ENCODE measurements at regions of chr14 and their contacts with region 1.

Region 1: DNA sequence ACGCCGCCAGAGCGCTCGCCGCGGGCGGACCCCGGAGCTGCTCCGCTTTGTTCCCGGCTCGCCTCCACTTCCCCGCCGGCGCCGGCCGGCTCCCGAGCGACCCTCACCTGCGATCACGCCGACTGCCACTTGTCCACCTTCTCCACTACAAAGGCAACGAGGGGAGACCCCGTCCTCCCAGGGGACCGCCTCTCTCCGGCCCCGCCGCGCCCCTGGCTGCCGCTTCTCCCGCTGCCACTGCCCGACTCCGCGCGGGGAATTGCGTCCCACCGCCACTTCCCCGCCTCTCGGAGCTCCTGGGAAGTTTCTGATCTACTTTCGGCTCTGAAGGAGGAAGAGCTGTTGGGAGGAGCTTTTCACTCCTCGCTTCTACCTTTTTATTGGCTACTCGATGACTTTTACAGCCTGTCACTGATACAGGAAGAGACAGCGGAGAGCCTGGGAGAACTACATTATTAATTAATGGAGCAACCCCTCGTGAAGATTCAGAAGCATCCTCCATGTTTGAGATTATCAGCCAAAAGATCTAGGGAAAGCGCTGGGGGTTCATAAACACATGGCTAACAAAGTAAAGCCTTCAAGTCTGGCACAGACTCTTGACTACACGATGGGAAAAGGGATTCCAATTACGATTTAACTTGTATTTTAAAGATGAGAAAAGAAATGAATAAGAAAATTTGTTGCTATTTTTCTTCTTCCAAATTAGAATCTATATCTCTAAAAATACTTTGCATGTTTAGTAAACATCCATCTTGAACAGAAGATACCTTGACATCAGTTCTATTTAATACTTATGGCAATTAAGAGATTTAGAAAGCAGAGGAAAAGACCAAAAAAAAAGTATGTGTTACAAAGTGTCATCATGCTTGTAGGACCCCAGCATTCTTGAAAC is at the start of gene BAZ1A:
- DNase-seq: peak; percentile 40
- ATAC-seq: no peak
- H3K4me3 Mint-ChIP-seq: peak within 1 kb of the TSS; percentile 100
- H3K27ac Mint-ChIP-seq: peak within 1 kb of the TSS; percentile 100
- H3K4me1 Mint-ChIP-seq: peaks cover 29% of the 10 kb centered on the region
- H3K27me3 Mint-ChIP-seq: no peaks in the 10 kb centered on the region
- CTCF ChIP-seq: no peak
- total RNA-seq, gene BAZ1A: 47.4 to 49.4 TPM

Region 2: GRCh38 chr14:34851395-34851794 is 23.9 kb before region 1 on chr14:
- CTCF ChIA-PET with region 1: no interaction called
- POLR2A ChIA-PET with region 1: interaction called, 10 read pairs
- intact Hi-C with region 1: no loop called
- DNase-seq: no peak
- ATAC-seq: no peak
- H3K4me3 Mint-ChIP-seq: no peak overlapping the region
- H3K27ac Mint-ChIP-seq: no peak overlapping the region
- H3K4me1 Mint-ChIP-seq: peaks cover 20% of the 10 kb centered on the region
- H3K27me3 Mint-ChIP-seq: no peaks in the 10 kb centered on the region
- CTCF ChIP-seq: no peak

Region 3: DNA sequence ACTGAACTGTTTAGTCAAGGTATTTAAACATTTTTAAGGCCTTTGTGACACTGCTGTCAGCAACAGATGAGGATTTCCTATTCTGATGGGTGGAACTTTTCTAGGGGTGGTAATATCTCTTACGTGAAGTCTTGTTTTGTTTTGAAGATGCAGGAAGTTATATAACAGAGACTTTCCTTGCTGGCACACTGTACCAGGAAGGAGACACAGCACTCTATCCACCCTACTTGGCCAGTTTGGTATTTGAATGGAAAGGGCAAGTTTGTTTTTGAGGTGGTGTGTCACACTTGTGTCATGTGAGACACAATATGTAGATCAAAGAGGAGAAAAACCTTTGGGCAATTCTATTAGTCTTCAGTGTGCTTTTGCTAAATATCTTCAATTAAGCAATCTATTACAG is 55.9 kb after region 1 on chr14:
- CTCF ChIA-PET with region 1: no interaction called
- POLR2A ChIA-PET with region 1: interaction called, 13 read pairs
- intact Hi-C with region 1: no loop called
- DNase-seq: peak; percentile 48
- ATAC-seq: peak; percentile 79
- H3K4me3 Mint-ChIP-seq: peak overlapping the region; percentile 60
- H3K27ac Mint-ChIP-seq: peak overlapping the region; percentile 97
- H3K4me1 Mint-ChIP-seq: peaks cover 40% of the 10 kb centered on the region
- H3K27me3 Mint-ChIP-seq: no peaks in the 10 kb centered on the region
- CTCF ChIP-seq: no peak

Region 4: DNA sequence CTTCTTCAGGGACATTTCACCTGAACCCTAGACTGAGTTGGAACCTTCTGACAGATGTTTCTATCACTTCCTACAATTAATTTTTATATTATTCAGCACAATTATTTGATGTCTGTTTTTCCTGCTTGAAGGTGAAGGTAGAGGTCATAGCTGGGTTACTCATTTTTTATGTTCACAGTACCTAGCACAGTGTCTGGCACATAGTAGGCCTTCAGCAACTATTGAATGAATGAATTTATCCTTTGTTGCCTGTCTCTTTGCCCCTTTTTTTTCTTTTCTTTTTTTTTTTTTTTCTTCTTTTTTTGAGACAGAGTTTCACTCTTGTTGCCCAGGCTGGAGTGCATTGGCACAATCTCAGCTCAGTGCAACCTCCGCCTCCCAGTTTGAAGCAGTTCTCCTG is 141.3 kb after region 1 on chr14:
- CTCF ChIA-PET with region 1: no interaction called
- POLR2A ChIA-PET with region 1: no interaction called
- intact Hi-C with region 1: no loop called
- DNase-seq: no peak
- ATAC-seq: no peak
- H3K4me3 Mint-ChIP-seq: no peak overlapping the region
- H3K27ac Mint-ChIP-seq: peak overlapping the region; percentile 64
- H3K4me1 Mint-ChIP-seq: no peaks in the 10 kb centered on the region
- H3K27me3 Mint-ChIP-seq: no peaks in the 10 kb centered on the region
- CTCF ChIP-seq: no peak

Region 5: GRCh38 chr14:35046048-35046741 is 170.9 kb after region 1 on chr14 and contains the start of gene FAM177A1:
- CTCF ChIA-PET with region 1: no interaction called
- POLR2A ChIA-PET with region 1: interaction called, 10 read pairs
- intact Hi-C with region 1: no loop called
- DNase-seq: peak; percentile 100
- ATAC-seq: peak; percentile 95
- H3K4me3 Mint-ChIP-seq: peak within 1 kb of the TSS; percentile 83
- H3K27ac Mint-ChIP-seq: peak within 1 kb of the TSS; percentile 97
- H3K4me1 Mint-ChIP-seq: peaks cover 25% of the 10 kb centered on the region
- H3K27me3 Mint-ChIP-seq: no peaks in the 10 kb centered on the region
- CTCF ChIP-seq: no peak
- total RNA-seq, gene FAM177A1: 28.0 to 35.8 TPM

Measured in activated CD8-positive, alpha-beta T cell treated with anti-CD3 and anti-CD28 coated beads for 36 hours (primary cell).